ENCODE measurements at regions of chr1 and their contacts with region 1.

Region 1: GRCh38 chr1:110412576-110412975 is 5.1 kb upstream of the LAMTOR5 start:
- DNase-seq: peak; percentile 63 to 71 (median 68)
- ATAC-seq: peak; percentile 55
- H3K4me3 ChIP-seq: no peak overlapping the region
- H3K27ac ChIP-seq: no peak overlapping the region
- H3K4me1 ChIP-seq: peaks cover 5% of the 10 kb centered on the region
- H3K27me3 ChIP-seq: no peaks in the 10 kb centered on the region
- CTCF ChIP-seq: peak; percentile 24 to 67 (median 60)
- POLR2A ChIP-seq: no peak

Region 2: GRCh38 chr1:110262846-110263631 is 149.5 kb before region 1 on chr1:
- intact Hi-C with region 1: no loop called
- DNase-seq: no peak
- ATAC-seq: no peak
- H3K4me3 ChIP-seq: no peak overlapping the region
- H3K27ac ChIP-seq: no peak overlapping the region
- H3K4me1 ChIP-seq: no peaks in the 10 kb centered on the region
- H3K27me3 ChIP-seq: no peaks in the 10 kb centered on the region
- CTCF ChIP-seq: no peak
- POLR2A ChIP-seq: no peak

Region 3: DNA sequence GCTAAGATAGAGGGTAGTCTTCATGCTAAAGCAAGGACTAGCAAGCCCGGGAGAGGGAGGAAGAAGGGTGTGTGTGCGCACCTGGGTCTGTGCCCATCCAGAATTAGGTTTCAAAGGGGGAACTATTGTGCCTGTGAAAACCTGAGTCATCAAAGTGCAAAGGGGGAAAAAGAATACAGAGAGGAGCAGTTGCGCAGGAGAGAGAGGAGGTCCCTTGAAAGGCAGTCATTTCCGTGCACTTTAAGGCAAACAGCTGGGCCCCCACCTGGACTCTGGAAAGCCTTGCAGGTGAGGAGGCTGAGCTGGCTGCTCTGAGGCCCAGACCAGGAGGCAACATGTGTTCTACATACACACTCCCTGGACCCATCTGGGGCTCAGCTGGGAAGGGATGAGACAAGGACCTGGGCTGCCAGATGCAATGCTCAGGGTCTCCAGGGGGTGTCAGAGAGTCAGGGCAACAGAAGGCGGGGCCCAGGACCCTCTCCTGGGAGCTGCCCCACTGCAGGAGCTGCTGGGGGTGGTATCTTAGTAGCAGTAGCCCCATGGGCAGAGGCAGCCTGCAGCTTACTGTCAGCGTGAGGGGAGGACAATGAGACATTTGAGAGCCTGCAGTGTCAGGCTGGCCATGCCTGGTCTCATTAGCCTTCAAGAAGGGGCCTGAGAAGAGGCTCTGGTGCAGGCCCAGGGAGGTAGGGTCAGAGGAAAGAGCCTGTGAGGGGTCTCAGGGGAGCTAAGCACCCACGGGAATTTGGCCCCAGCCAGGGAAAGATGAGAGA is 52.6 kb after region 1 on chr1:
- intact Hi-C with region 1: no loop called
- DNase-seq: peak in 3 of 4 donors; percentile 10 to 52 (median 17)
- ATAC-seq: no peak
- H3K4me3 ChIP-seq: no peak overlapping the region
- H3K27ac ChIP-seq: peak overlapping the region; percentile 37 to 61 (median 50)
- H3K4me1 ChIP-seq: peaks cover 25% of the 10 kb centered on the region
- H3K27me3 ChIP-seq: no peaks in the 10 kb centered on the region
- CTCF ChIP-seq: no peak
- POLR2A ChIP-seq: no peak

Region 4: DNA sequence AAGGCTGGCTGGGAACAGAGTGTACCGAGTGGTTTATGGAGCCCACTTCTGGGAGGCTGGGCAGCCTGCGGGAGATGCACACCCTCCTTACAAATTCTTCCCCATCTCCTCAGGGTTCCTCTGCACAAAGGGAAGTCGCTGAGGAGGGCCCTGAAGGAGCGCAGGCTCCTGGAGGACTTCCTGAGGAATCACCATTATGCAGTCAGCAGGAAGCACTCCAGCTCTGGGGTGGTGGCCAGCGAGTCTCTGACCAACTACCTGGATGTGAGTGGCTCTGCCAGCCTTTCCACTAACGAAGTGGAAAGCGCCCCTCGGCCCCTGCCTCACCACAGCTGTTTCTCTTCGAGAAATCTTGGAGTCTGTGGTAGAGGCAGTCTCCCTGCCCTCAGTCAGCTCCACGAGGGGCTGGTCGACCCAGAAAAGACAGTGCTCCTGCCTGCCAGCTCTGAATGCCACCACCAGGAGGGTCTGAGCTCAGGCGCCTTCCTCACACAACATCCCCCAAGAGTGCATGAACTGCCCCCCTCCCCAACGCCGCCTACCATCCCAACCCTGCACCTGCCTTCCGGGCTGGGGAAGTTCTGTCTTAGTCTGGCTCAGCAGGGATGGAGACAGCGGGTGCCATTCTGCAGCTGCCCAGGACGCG is 70.2 kb after region 1 on chr1:
- intact Hi-C with region 1: loop called (anchors 10 kb)
- DNase-seq: no peak
- ATAC-seq: peak; percentile 13
- H3K4me3 ChIP-seq: no peak overlapping the region
- H3K27ac ChIP-seq: no peak overlapping the region
- H3K4me1 ChIP-seq: peaks cover 9% of the 10 kb centered on the region
- H3K27me3 ChIP-seq: no peaks in the 10 kb centered on the region
- CTCF ChIP-seq: no peak
- POLR2A ChIP-seq: no peak